Activated CD8-positive, alpha-beta memory T cell treated with anti-CD3 and anti-CD28 coated beads, Interleukin-2, amount 10 ng/mL, durations not matched to agents 7 days and 5 days (primary cell): ENCODE measurements at regions of chr7 and their contacts with region 1.

Region 1: GRCh38 chr7:76179686-76180085 is 22.0 kb upstream of the SRRM3 start:
- DNase-seq: no peak
- ATAC-seq: no peak
- H3K4me3 Mint-ChIP-seq: no peak overlapping the region
- H3K27ac Mint-ChIP-seq: no peak overlapping the region
- H3K4me1 Mint-ChIP-seq: peaks cover 6% of the 10 kb centered on the region
- H3K27me3 Mint-ChIP-seq: no peaks in the 10 kb centered on the region

Region 2: DNA sequence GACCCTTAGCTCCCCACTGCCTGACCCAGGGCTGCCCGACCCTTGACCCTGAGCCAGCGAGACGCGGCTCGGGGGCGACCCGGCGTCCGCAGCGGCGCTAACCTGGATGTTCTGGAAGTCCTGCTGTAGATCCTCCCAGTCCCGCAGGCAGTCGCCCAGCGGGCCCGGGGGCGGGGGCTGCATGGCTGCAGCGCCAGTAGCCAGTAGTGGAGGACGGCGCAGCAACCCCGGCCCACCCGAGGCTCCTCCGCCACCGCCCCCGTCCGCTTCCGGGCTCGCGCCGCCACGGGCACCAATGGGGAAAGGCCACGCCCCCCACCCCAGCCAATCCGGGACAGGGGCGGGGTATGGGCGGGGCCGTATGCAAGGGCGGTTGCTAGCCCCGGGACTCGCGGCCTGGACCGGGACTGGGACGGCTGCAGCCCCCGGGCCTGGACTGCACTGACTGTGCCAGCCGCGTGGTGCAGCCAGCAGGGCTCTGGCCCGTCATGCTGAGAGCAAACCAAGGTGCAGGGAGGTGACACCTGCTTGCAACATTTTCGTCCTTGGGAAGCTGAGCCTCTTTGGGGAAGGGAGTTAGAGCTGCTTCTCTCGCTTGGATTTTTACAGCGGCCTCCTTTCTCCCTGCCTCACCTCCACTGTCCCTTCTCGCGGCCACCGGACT is 185.2 kb before region 1 on chr7 and contains the start of gene TMEM120A:
- CTCF ChIA-PET with region 1: no interaction called
- DNase-seq: peak; percentile 95
- ATAC-seq: peak; percentile 98
- H3K4me3 Mint-ChIP-seq: peak within 1 kb of the TSS; percentile 70
- H3K27ac Mint-ChIP-seq: peak within 1 kb of the TSS; percentile 36
- H3K4me1 Mint-ChIP-seq: peaks cover 32% of the 10 kb centered on the region
- H3K27me3 Mint-ChIP-seq: no peaks in the 10 kb centered on the region
- total RNA-seq, gene TMEM120A: 25.4 to 27.0 TPM

Region 3: GRCh38 chr7:76166404-76167255 is 13.1 kb before region 1 on chr7:
- CTCF ChIA-PET with region 1: interaction called, 31 read pairs
- DNase-seq: peak; percentile 96
- ATAC-seq: peak; percentile 97
- H3K4me3 Mint-ChIP-seq: peak overlapping the region; percentile 83
- H3K27ac Mint-ChIP-seq: peak overlapping the region; percentile 89
- H3K4me1 Mint-ChIP-seq: peaks cover 9% of the 10 kb centered on the region
- H3K27me3 Mint-ChIP-seq: no peaks in the 10 kb centered on the region

Region 4: GRCh38 chr7:76234931-76235441 is 55.3 kb after region 1 on chr7:
- CTCF ChIA-PET with region 1: interaction called, 11 read pairs
- DNase-seq: peak; percentile 88
- ATAC-seq: peak; percentile 94
- H3K4me3 Mint-ChIP-seq: peak overlapping the region; percentile 24
- H3K27ac Mint-ChIP-seq: no peak overlapping the region
- H3K4me1 Mint-ChIP-seq: peaks cover 2% of the 10 kb centered on the region
- H3K27me3 Mint-ChIP-seq: peaks cover 36% of the 10 kb centered on the region

Region 5: DNA sequence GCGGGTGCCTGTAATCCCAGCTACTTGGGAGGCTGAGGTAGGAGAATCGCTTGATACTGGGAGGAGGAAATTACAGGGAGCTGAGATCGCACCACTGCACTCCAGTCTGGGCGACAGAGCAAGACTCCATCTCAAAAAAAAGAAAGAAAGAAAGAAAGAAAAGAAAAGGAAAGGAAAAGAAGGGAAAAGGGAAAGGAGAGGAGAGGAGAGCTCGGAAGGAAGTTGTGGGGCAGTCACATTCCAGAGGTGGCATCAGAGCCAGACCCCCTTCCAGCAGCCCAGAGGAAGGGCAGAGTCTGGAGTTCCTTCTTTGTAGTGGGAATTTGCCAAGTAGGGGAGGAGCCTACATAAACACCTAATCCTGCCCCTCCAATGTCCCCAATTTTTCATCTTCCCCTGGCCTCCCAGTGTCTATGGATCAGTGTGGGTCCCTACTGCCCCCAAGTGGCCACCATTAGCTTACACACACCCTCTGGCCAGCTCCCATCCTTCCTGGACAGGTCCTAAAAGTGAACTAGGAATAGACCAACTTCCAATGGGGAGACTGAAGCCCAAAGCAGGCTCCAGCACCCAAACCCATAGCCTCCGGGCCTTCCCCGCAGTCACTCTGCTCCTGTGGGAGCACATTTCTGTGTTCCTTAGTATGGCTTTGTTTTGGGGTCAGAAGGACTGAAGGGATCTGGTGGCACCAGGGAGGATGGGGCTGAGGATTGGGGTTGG is 83.2 kb after region 1 on chr7:
- CTCF ChIA-PET with region 1: interaction called, 46 read pairs
- DNase-seq: peak; percentile 61
- ATAC-seq: peak; percentile 41
- H3K4me3 Mint-ChIP-seq: no peak overlapping the region
- H3K27ac Mint-ChIP-seq: no peak overlapping the region
- H3K4me1 Mint-ChIP-seq: peaks cover 3% of the 10 kb centered on the region
- H3K27me3 Mint-ChIP-seq: peaks cover 20% of the 10 kb centered on the region

Region 6: DNA sequence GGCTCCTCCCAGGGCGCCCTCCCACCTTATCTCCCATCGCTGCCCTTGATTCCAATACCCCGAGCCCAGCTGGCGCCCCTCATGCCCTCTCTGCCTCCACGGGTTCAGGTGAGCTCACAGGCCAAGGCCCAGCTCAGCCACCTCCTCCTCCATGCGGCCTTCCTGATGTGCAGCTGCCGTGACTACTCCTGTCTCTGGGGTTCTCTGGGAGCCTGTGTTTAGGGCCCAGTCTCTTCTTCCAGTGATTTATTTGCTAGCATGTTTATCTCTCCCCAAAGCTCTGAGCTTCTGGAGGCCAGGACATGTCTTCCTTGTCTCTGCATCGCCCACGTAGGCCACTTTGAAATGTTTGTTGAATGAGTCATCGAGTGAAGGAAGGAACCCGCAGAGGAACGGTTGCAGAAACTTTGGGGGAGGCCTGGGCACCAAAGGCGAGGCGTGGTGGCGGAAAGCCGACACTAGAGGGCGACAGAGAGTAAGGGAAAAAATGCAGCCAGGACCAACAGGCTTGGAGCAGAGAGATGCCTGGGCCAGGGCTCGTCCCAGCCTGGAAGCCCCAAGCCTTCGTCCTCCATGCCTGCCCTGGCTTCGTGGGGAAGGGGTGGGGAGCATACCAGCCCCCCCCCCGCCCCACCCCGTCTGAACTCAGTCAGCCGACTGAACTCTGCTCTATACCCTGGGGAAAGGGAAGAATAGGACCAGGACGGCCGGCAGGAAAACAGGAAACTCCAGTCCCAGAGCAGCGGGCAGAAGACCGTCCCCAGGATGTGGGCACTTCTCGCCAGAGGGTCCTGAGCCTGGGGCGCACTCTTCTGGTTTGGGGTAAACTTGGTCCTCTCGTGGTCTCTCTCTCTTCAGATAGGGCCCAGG is 111.9 kb after region 1 on chr7:
- CTCF ChIA-PET with region 1: interaction called, 28 read pairs
- DNase-seq: peak; percentile 94
- ATAC-seq: peak; percentile 96
- H3K4me3 Mint-ChIP-seq: peak overlapping the region; percentile 0
- H3K27ac Mint-ChIP-seq: peak overlapping the region; percentile 84
- H3K4me1 Mint-ChIP-seq: peaks cover 23% of the 10 kb centered on the region
- H3K27me3 Mint-ChIP-seq: no peaks in the 10 kb centered on the region